Cardiac septum (tissue), 1 donor: ENCODE measurements at regions of chr3 and their contacts with region 1.

Region 1: GRCh38 chr3:155154255-155154654 is 74.1 kb downstream of the MME start:
- DNase-seq: no peak

Region 2: GRCh38 chr3:155185631-155186071 is 31.4 kb after region 1 on chr3:
- intact Hi-C with region 1: loop called (anchors 1 kb)
- DNase-seq: no peak

Region 3: GRCh38 chr3:155217591-155217990 is 63.3 kb after region 1 on chr3:
- intact Hi-C with region 1: no loop called
- DNase-seq: no peak